Activated CD4-positive, alpha-beta memory T cell treated with anti-CD3 and anti-CD28 coated beads for 36 hours (primary cell): ENCODE measurements at regions of chr11 and their contacts with region 1.

Region 1: GRCh38 chr11:121451986-121452608 is at the start of gene SORL1:
- DNase-seq: peak; percentile 86
- H3K4me3 Mint-ChIP-seq: peak within 1 kb of the TSS; percentile 87
- H3K27ac Mint-ChIP-seq: peak within 1 kb of the TSS; percentile 93
- H3K4me1 Mint-ChIP-seq: peaks cover 86% of the 10 kb centered on the region
- H3K27me3 Mint-ChIP-seq: no peaks in the 10 kb centered on the region
- total RNA-seq, gene SORL1: 48.1 to 49.3 TPM

Region 2: DNA sequence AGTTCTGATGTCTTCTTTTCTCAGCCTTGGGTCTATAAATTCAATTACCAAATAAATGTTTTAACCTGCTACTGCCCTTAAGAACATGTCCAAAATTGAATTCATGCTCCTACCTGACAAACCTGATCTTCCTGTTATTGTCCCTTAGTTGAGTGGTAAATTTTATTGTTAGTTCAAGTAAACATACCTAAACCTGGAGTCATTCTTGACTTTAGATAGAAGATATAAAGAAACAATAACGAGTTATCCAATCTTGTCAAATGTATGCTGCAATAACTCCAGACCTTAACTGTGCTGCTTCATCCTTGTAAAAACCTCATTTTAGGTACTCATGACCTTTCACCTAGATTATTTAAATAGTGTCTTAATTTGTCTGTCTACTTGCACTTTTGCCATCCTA is 194.1 kb before region 1 on chr11:
- CTCF ChIA-PET with region 1: no interaction called
- POLR2A ChIA-PET with region 1: no interaction called
- intact Hi-C with region 1: no loop called
- DNase-seq: no peak
- H3K4me3 Mint-ChIP-seq: no peak overlapping the region
- H3K27ac Mint-ChIP-seq: no peak overlapping the region
- H3K4me1 Mint-ChIP-seq: no peaks in the 10 kb centered on the region
- H3K27me3 Mint-ChIP-seq: peaks cover 2% of the 10 kb centered on the region

Region 3: DNA sequence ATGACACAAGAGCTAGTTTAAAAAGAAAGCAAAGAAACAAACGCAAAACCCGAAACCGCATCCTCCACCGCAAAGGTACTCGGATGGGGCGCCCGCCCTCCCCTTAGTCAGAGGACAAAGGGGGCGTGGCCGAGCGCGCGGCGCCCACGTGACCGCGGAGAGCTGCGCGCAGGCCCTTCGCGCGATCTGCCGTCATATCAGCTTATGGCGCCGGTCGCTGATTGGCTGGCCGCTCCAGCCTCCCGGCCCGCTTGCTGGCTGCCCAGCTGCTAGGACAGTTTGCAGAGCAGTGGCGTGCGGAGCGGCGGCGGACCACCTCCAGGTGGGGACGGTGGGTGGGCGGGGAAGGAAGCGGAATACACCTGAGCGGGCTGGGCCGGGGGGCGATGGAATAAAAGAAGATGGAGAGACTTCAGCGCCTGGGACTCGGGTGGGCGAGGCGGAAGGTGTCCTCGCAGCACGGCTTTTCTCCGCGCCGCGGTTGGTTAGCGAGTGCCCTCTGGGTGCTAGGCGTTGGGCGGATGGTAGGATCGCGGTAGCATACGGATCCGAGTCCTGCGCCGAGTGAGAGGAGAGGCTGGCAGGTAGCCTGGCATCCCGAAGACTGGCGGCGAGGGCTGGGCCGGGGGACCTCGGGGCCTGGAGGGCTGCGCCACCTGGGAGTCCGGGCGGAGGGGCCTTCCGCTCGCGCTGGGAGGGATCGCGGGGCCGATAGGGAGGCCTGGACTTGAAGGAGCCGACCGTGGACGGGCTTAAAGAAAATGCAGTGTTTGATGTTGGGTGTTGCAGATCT is 159.4 kb before region 1 on chr11 and contains the start of gene SC5D:
- CTCF ChIA-PET with region 1: no interaction called
- POLR2A ChIA-PET with region 1: no interaction called
- intact Hi-C with region 1: loop called (anchors 1 kb)
- DNase-seq: peak; percentile 96
- H3K4me3 Mint-ChIP-seq: peak within 1 kb of the TSS; percentile 95
- H3K27ac Mint-ChIP-seq: peak within 1 kb of the TSS; percentile 95
- H3K4me1 Mint-ChIP-seq: peaks cover 41% of the 10 kb centered on the region
- H3K27me3 Mint-ChIP-seq: no peaks in the 10 kb centered on the region
- total RNA-seq, gene SC5D: 23.3 to 24.7 TPM

Region 4: DNA sequence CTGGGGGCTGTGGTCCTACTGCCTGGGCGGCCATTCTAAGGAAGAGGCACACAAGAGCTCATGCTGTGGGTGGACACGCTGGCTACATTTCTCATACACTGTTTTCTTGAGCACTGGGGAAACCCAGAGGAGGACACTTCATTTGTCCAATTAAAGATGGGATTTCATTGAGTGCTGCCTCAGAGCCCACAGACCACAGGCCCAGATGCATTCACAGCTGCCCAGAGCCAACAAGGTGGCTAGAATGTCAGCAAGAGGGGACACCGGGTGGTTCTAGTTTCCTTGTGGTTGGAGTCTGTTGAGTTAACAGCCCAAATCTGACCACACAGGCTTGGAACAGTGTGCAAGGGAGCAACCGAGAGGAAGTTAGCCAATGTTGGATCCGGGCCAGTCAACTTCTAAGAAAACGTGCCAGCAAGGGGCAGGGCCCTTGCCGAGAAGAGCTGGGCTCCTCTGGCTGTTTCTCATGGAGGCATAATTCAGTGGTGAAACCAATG is 35.0 kb before region 1 on chr11:
- CTCF ChIA-PET with region 1: interaction called, 4 read pairs
- POLR2A ChIA-PET with region 1: no interaction called
- intact Hi-C with region 1: loop called (anchors 1 kb)
- DNase-seq: peak; percentile 81
- H3K4me3 Mint-ChIP-seq: no peak overlapping the region
- H3K27ac Mint-ChIP-seq: peak overlapping the region; percentile 85
- H3K4me1 Mint-ChIP-seq: peaks cover 66% of the 10 kb centered on the region
- H3K27me3 Mint-ChIP-seq: no peaks in the 10 kb centered on the region

Region 5: GRCh38 chr11:121464352-121464946 is 12.4 kb after region 1 on chr11:
- CTCF ChIA-PET with region 1: interaction called, 50 read pairs
- POLR2A ChIA-PET with region 1: interaction called, 51 read pairs
- intact Hi-C with region 1: loop called (anchors 1 kb)
- DNase-seq: peak; percentile 94
- H3K4me3 Mint-ChIP-seq: peak overlapping the region; percentile 63
- H3K27ac Mint-ChIP-seq: peak overlapping the region; percentile 99
- H3K4me1 Mint-ChIP-seq: peaks cover 98% of the 10 kb centered on the region
- H3K27me3 Mint-ChIP-seq: no peaks in the 10 kb centered on the region

Region 6: DNA sequence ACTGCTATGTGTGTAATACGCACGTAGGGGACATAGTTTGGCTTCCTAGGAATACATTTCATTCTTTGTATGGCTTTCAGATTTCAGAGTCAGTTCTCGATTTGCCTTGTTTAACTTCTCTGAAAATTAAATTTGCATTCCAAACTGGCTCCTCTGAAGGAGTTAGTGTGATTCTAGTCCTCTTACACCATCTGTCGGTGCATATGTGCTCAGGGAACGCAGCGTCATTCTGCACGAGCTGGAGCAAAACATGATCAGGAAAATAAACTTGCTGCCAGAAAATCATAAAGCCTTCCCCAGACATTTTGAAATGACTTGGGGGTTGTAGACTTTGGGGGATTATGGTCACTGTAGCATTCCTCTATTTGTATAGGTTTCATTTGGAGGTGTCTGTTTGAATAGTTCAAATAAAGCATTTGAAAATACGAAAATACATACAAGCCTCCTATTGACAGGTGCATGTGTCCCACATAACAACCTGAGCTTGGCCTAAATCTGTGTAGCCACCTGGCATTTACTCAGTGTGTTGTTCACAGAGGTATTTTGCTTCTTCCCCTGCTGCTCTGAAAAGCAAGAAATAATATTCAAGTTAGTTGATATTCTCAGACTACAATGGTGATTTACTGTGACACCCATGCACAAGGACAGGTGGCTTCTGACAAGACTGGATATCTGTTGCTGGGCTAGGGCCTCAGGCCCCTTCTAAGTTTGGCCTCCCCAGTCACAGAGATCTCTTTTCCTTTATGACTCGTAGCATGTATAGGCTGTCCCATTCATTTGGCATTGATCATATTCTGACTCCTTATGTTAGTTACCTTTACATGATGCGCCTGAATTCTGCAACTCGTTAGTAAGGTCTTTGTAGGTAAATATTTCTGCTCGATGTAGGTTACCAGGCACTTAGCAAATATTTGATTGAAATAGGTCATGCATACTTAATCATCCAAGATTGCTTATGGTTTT is 82.3 kb after region 1 on chr11:
- CTCF ChIA-PET with region 1: interaction called, 4 read pairs
- POLR2A ChIA-PET with region 1: interaction called, 3 read pairs
- intact Hi-C with region 1: loop called (anchors 2 kb)
- DNase-seq: no peak
- H3K4me3 Mint-ChIP-seq: no peak overlapping the region
- H3K27ac Mint-ChIP-seq: no peak overlapping the region
- H3K4me1 Mint-ChIP-seq: peaks cover 51% of the 10 kb centered on the region
- H3K27me3 Mint-ChIP-seq: no peaks in the 10 kb centered on the region